ENCODE measurements at regions of chr2 and their contacts with region 1.

Region 1: GRCh38 chr2:219642465-219643080 is 15.1 kb downstream of the SLC4A3 start:
- DNase-seq: peak; percentile 73
- ATAC-seq: peak; percentile 99
- H3K4me3 ChIP-seq: peak overlapping the region; percentile 24; the same call in 1 of the 2 replicates
- H3K27ac ChIP-seq: 0 out of 2 replicates have a peak overlapping the region, but pooled peaks have one; percentile 37
- H3K4me1 ChIP-seq: peaks cover 13% of the 10 kb centered on the region
- H3K27me3 ChIP-seq: no peaks in the 10 kb centered on the region
- CTCF ChIP-seq: peak; percentile 99 to 100 (median 100); a peak in 5 of 6 replicates
- EP300 ChIP-seq: peak; percentile 21 to 50; a peak in 1 of 4 replicates
- POLR2A ChIP-seq: 0 out of 2 replicates have a peak, but pooled peaks have one; percentile 38
- RAD21 ChIP-seq: peak; percentile 93

Region 2: GRCh38 chr2:219475697-219476651 is 166.6 kb before region 1 on chr2:
- CTCF ChIA-PET with region 1: no interaction called
- POLR2A ChIA-PET with region 1: no interaction called
- RAD21 ChIA-PET with region 1: no interaction called
- SMC1A ChIA-PET with region 1: interaction called, 3 read pairs
- in situ Hi-C with region 1: no loop called
- intact Hi-C with region 1: loop called (anchors 10 kb)
- DNase-seq: no peak
- ATAC-seq: peak; percentile 87
- H3K4me3 ChIP-seq: no peak overlapping the region
- H3K27ac ChIP-seq: no peak overlapping the region
- H3K4me1 ChIP-seq: no peaks in the 10 kb centered on the region
- H3K27me3 ChIP-seq: no peaks in the 10 kb centered on the region; a peak in 2 of 4 replicates
- CTCF ChIP-seq: peak; percentile 63 to 75 (median 74)
- EP300 ChIP-seq: no peak
- POLR2A ChIP-seq: no peak
- RAD21 ChIP-seq: peak; percentile 54

Region 3: DNA sequence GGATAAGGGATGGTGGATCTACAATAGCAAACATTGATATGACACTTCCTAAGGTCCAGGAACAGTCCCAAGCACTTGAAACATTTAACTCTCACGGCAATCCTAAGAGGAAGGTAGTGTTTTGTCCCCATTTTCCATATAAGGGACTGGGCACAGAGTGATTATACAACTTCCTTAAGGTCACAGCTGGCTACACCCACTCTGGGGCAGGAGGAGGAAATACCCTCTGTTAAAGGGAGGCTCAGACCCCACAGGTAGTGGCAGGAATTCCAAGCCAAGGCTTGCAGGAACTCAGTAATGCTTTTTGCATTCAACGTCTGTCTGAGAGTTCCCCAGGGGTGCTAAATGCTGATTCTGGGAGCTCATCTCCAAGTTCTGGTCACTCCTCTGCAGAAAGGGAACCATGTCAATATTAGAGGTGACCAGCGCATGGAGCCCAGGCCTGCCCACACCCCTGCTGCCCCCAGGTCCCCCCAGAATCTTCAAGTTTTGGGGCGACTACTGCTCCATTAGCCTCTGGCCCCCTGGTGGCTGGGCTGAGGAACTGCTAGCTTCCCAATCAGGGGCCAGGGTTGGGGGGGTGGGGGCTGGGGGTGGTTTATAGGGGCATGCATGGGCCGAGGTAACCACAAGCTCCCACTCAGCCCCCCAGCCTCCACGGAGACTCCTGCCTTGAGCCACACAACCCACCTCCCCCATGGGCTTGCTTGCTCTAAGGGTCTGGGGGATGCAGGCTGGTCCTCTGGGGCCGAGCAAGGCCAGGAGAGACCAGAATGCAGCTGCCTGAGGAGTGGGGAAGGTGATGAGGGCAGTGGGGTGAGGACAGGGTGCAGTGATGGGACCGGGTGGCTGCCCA is 82.3 kb before region 1 on chr2:
- CTCF ChIA-PET with region 1: interaction called, 13 read pairs
- POLR2A ChIA-PET with region 1: no interaction called
- RAD21 ChIA-PET with region 1: no interaction called
- SMC1A ChIA-PET with region 1: interaction called, 4 read pairs
- in situ Hi-C with region 1: no loop called
- intact Hi-C with region 1: no loop called
- DNase-seq: no peak
- ATAC-seq: peak; percentile 75
- H3K4me3 ChIP-seq: no peak overlapping the region
- H3K27ac ChIP-seq: no peak overlapping the region
- H3K4me1 ChIP-seq: no peaks in the 10 kb centered on the region
- H3K27me3 ChIP-seq: no peaks in the 10 kb centered on the region; a peak in 2 of 4 replicates
- CTCF ChIP-seq: peak; percentile 41 to 70 (median 45)
- EP300 ChIP-seq: no peak
- POLR2A ChIP-seq: no peak
- RAD21 ChIP-seq: 0 out of 2 replicates have a peak, but pooled peaks have one; percentile 14

Region 4: GRCh38 chr2:219597552-219598307 is 44.8 kb before region 1 on chr2 and contains the start of gene STK11IP:
- CTCF ChIA-PET with region 1: interaction called, 15 read pairs
- POLR2A ChIA-PET with region 1: interaction called, 4 read pairs
- RAD21 ChIA-PET with region 1: interaction called, 10 read pairs
- SMC1A ChIA-PET with region 1: interaction called, 5 read pairs
- in situ Hi-C with region 1: no loop called
- intact Hi-C with region 1: no loop called
- DNase-seq: peak; percentile 84
- ATAC-seq: peak; percentile 96
- H3K4me3 ChIP-seq: peak within 1 kb of the TSS; percentile 74
- H3K27ac ChIP-seq: peak within 1 kb of the TSS; percentile 81
- H3K4me1 ChIP-seq: 0 out of 2 replicates have a peak, but pooled peaks cover 8% of the 10 kb centered on the region
- H3K27me3 ChIP-seq: no peaks in the 10 kb centered on the region
- CTCF ChIP-seq: no peak
- EP300 ChIP-seq: no peak
- POLR2A ChIP-seq: peak; percentile 97
- RAD21 ChIP-seq: no peak
- polyA plus RNA-seq, gene STK11IP: 0.42 to 1.6 TPM

Region 5: GRCh38 chr2:219661197-219661954 is 18.8 kb after region 1 on chr2:
- CTCF ChIA-PET with region 1: interaction called, 15 read pairs
- POLR2A ChIA-PET with region 1: no interaction called
- RAD21 ChIA-PET with region 1: no interaction called
- SMC1A ChIA-PET with region 1: interaction called, 5 read pairs
- in situ Hi-C with region 1: no loop called
- intact Hi-C with region 1: no loop called
- DNase-seq: peak; percentile 44
- ATAC-seq: peak; percentile 98
- H3K4me3 ChIP-seq: no peak overlapping the region
- H3K27ac ChIP-seq: peak overlapping the region; percentile 59
- H3K4me1 ChIP-seq: peaks cover 9% of the 10 kb centered on the region
- H3K27me3 ChIP-seq: no peaks in the 10 kb centered on the region
- CTCF ChIP-seq: no peak
- EP300 ChIP-seq: no peak
- POLR2A ChIP-seq: no peak
- RAD21 ChIP-seq: no peak

Region 6: GRCh38 chr2:219689676-219690628 is 47.4 kb after region 1 on chr2:
- CTCF ChIA-PET with region 1: interaction called, 43 read pairs
- POLR2A ChIA-PET with region 1: no interaction called
- RAD21 ChIA-PET with region 1: interaction called, 6 read pairs
- SMC1A ChIA-PET with region 1: interaction called, 12 read pairs
- in situ Hi-C with region 1: no loop called
- intact Hi-C with region 1: loop called (anchors 1 kb)
- DNase-seq: peak; percentile 23
- ATAC-seq: peak; percentile 62
- H3K4me3 ChIP-seq: no peak overlapping the region
- H3K27ac ChIP-seq: no peak overlapping the region
- H3K4me1 ChIP-seq: peaks cover under 1% of the 10 kb centered on the region; the same call in 1 of the 2 replicates
- H3K27me3 ChIP-seq: peaks cover 0 to 2% of the 10 kb centered on the region in 2 experiments; a peak in 1 of 4 replicates
- CTCF ChIP-seq: peak; percentile 63 to 77 (median 66)
- EP300 ChIP-seq: no peak
- POLR2A ChIP-seq: no peak
- RAD21 ChIP-seq: peak; percentile 69

Region 7: GRCh38 chr2:219783359-219783975 is 140.9 kb after region 1 on chr2:
- CTCF ChIA-PET with region 1: no interaction called
- POLR2A ChIA-PET with region 1: no interaction called
- RAD21 ChIA-PET with region 1: no interaction called
- SMC1A ChIA-PET with region 1: no interaction called
- in situ Hi-C with region 1: no loop called
- intact Hi-C with region 1: no loop called
- DNase-seq: no peak
- ATAC-seq: no peak
- H3K4me3 ChIP-seq: no peak overlapping the region
- H3K27ac ChIP-seq: no peak overlapping the region
- H3K4me1 ChIP-seq: no peaks in the 10 kb centered on the region
- H3K27me3 ChIP-seq: no peaks in the 10 kb centered on the region; a peak in 1 of 4 replicates
- CTCF ChIP-seq: no peak
- EP300 ChIP-seq: no peak
- POLR2A ChIP-seq: no peak
- RAD21 ChIP-seq: no peak